ENCODE measurements at regions of chr3 and their contacts with region 1.

Region 1: DNA sequence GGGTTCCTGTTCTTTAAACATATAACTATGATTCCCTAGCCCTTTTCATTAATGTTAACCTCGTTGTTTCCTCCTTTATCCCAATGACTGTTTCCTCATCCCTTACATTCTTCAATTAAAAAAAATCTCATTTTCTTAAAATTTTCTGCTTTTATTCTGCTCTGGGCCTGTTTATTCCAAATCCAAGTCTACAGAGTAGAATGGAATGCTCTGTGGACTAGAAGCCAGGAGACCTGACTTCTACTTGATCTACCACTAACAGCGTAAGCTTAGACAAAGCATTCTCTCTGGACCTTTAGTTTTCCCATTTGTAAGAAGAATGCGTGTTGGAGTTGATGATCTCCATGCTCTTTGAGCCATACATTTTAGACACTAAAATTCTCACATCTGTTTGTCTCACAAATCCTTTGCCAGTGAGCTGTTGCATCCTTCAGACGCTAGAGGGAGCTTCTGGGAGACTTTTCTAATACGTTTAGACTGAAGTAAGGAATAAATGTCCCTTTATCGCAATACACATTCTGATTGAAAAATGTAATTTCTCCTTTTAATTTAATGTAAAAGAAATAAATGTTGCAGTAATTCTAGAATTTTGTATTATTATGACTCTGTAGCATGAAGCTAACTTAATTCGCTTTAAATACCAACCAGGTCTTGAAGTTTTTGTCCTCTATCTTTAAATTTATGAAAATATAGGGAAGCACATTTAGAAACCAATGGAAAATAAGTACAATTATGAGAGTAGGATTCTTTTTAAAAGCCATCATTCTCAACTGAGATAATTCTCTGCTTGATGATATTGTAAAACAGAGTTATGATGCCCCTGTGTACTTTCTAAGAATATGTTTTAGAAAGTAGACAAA is 21.7 kb upstream of the GMNC start:
- DNase-seq: peak; percentile 53
- ATAC-seq: peak; percentile 72
- H3K4me3 Mint-ChIP-seq: no peak overlapping the region
- H3K27ac Mint-ChIP-seq: no peak overlapping the region
- H3K4me1 Mint-ChIP-seq: no peaks in the 10 kb centered on the region
- H3K27me3 Mint-ChIP-seq: no peaks in the 10 kb centered on the region
- CTCF ChIP-seq: peak; percentile 75

Region 2: GRCh38 chr3:190862209-190863118 is 21.7 kb before region 1 on chr3 and contains the start of gene GMNC:
- CTCF ChIA-PET with region 1: interaction called, 12 read pairs
- POLR2A ChIA-PET with region 1: no interaction called
- DNase-seq: peak; percentile 75
- ATAC-seq: peak; percentile 98
- H3K4me3 Mint-ChIP-seq: peak within 1 kb of the TSS; percentile 94
- H3K27ac Mint-ChIP-seq: no peak within 1 kb of the TSS
- H3K4me1 Mint-ChIP-seq: peaks cover 16% of the 10 kb centered on the region
- H3K27me3 Mint-ChIP-seq: peaks cover 56% of the 10 kb centered on the region
- CTCF ChIP-seq: no peak
- total RNA-seq, gene GMNC: 0.07 to 0.39 TPM (median 0.25 TPM) in 3 replicates

Region 3: GRCh38 chr3:191051037-191051436 is 166.8 kb after region 1 on chr3:
- CTCF ChIA-PET with region 1: interaction called, 18 read pairs
- POLR2A ChIA-PET with region 1: interaction called, 3 read pairs
- DNase-seq: no peak
- ATAC-seq: peak; percentile 50; the same call in 1 of the 2 replicates
- H3K4me3 Mint-ChIP-seq: no peak overlapping the region
- H3K27ac Mint-ChIP-seq: no peak overlapping the region
- H3K4me1 Mint-ChIP-seq: no peaks in the 10 kb centered on the region
- H3K27me3 Mint-ChIP-seq: no peaks in the 10 kb centered on the region
- CTCF ChIP-seq: peak; percentile 35; the same call in 1 of the 2 replicates